PC-3 (cell line): ENCODE measurements at regions of chr11 and their contacts with region 1.

Region 1: GRCh38 chr11:35579557-35580396 is 38.5 kb upstream of the FJX1 start:
- DNase-seq: peak; percentile 86
- ATAC-seq: peak; percentile 82
- H3K4me3 ChIP-seq: peak overlapping the region; percentile 54; the same call in 1 of the 2 replicates
- H3K27ac ChIP-seq: peak overlapping the region; percentile 84
- H3K4me1 ChIP-seq: peaks cover 33% of the 10 kb centered on the region
- H3K27me3 ChIP-seq: no peaks in the 10 kb centered on the region
- CTCF ChIP-seq: no peak

Region 2: DNA sequence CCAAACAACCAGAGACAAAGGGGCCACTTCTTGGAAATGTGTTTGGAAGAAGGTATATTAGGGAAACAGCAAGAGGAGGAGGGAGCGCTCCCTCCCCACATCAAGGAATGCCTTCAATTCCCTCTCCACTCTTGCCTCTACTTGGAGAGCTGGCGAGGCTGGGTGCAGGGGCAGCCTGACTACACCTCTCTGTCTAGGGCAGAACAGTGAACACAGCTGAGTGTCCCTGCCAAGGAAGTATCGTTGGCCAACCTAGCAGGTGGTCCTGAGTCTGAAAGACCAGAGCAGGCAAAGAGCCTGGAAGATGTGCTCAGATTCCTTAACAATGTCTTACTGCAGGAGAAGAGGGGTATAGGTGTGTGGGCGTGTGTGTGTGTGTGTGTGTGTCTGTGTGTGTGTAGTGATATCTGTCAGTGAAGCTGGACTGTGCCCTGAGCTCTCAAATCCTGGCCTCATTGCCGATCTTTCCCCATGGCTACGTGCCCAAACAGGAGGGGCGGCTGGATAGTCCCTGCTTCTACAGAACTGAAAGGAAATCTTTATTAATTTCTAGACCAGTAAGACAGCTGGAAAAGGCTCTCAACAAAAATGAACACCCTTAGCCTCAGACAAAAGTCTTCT is 101.2 kb before region 1 on chr11:
- CTCF ChIA-PET with region 1: no interaction called
- POLR2A ChIA-PET with region 1: no interaction called
- intact Hi-C with region 1: no loop called
- DNase-seq: no peak
- ATAC-seq: no peak
- H3K4me3 ChIP-seq: no peak overlapping the region
- H3K27ac ChIP-seq: no peak overlapping the region
- H3K4me1 ChIP-seq: peaks cover 7% of the 10 kb centered on the region; the same call in 1 of the 2 replicates
- H3K27me3 ChIP-seq: no peaks in the 10 kb centered on the region
- CTCF ChIP-seq: no peak

Region 3: DNA sequence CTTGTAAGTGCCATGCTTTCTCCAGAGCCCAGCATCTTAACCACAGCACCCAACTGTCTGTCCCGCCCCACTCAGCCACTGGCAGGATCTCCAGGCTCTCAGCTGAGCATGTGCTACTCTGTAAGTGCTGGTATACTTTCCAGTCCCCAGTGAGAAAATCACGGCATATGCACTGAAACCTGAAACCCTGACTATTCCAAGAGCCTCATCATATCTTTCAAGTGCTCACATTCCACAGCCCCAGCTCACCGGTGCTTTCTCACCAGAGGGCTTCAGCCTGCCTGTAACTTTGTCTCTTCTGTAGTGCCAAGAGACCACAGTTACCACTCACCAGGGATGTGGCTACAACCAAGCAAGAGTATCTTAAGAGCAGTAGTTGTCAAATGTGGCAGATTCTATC is 30.0 kb before region 1 on chr11:
- CTCF ChIA-PET with region 1: no interaction called
- POLR2A ChIA-PET with region 1: no interaction called
- intact Hi-C with region 1: loop called (anchors 2 kb)
- DNase-seq: peak; percentile 89
- ATAC-seq: peak; percentile 93
- H3K4me3 ChIP-seq: no peak overlapping the region
- H3K27ac ChIP-seq: peak overlapping the region; percentile 44
- H3K4me1 ChIP-seq: peaks cover 31% of the 10 kb centered on the region
- H3K27me3 ChIP-seq: no peaks in the 10 kb centered on the region
- CTCF ChIP-seq: no peak

Region 4: GRCh38 chr11:35593143-35593542 is 13.4 kb after region 1 on chr11:
- CTCF ChIA-PET with region 1: no interaction called
- POLR2A ChIA-PET with region 1: no interaction called
- intact Hi-C with region 1: loop called (anchors 2 kb)
- DNase-seq: peak; percentile 87
- ATAC-seq: peak; percentile 79
- H3K4me3 ChIP-seq: no peak overlapping the region
- H3K27ac ChIP-seq: 0 out of 2 replicates have a peak overlapping the region, but pooled peaks have one; percentile 11
- H3K4me1 ChIP-seq: peaks cover 33% of the 10 kb centered on the region
- H3K27me3 ChIP-seq: no peaks in the 10 kb centered on the region
- CTCF ChIP-seq: no peak